ENCODE measurements at regions of chr15 and their contacts with region 1.

Region 1: GRCh38 chr15:90851114-90851513 is 17.3 kb upstream of the FURIN start:
- DNase-seq: no peak
- H3K4me3 Mint-ChIP-seq: peak overlapping the region; percentile 60
- H3K27ac Mint-ChIP-seq: peak overlapping the region; percentile 94
- H3K4me1 Mint-ChIP-seq: peaks cover 53% of the 10 kb centered on the region
- H3K27me3 Mint-ChIP-seq: no peaks in the 10 kb centered on the region

Region 2: DNA sequence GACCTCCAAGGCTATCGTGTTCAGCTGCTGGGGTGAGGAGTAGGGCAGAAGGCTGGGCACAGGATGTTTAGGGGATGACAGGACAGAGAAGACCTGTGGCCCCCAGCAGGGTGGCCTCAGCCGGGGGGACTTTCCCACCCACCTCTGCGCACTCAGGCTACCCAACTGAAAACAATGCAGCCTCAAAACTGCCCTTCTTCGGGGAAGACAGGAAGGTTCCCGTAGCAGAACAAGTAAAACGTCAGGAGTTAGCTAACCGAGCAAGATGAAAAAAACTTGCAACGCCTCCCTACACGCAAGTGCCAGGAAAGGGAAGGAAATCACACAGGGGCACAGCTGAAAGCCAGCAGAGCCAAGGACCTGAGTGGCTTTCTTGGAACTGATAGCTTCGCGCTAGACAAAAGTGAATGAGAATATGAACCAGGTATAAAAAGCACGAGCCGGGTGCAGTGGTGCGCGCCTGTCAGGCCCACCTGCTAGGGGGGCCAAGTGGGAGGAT is 21.1 kb before region 1 on chr15:
- intact Hi-C with region 1: loop called (anchors 2 kb)
- DNase-seq: peak; percentile 57
- H3K4me3 Mint-ChIP-seq: peak overlapping the region; percentile 31
- H3K27ac Mint-ChIP-seq: peak overlapping the region; percentile 96
- H3K4me1 Mint-ChIP-seq: peaks cover 39% of the 10 kb centered on the region
- H3K27me3 Mint-ChIP-seq: no peaks in the 10 kb centered on the region

Region 3: GRCh38 chr15:90838141-90838540 is 13.0 kb before region 1 on chr15:
- intact Hi-C with region 1: loop called (anchors 1 kb)
- DNase-seq: peak; percentile 79
- H3K4me3 Mint-ChIP-seq: peak overlapping the region; percentile 70
- H3K27ac Mint-ChIP-seq: peak overlapping the region; percentile 96
- H3K4me1 Mint-ChIP-seq: peaks cover 54% of the 10 kb centered on the region
- H3K27me3 Mint-ChIP-seq: no peaks in the 10 kb centered on the region

Measured in activated T-helper 2 cell treated with anti-CD3 and anti-CD28 coated beads, Interferon-gamma antibody, Interleukin-2, Interleukin-4, amounts not matched to agents 10 μg/mL and 5 μg/mL and 100 μg/mL, durations not matched to agents 14 hours and 24 hours and 36 hours (primary cell).